ENCODE measurements at regions of chr4 and their contacts with region 1.

Region 1: DNA sequence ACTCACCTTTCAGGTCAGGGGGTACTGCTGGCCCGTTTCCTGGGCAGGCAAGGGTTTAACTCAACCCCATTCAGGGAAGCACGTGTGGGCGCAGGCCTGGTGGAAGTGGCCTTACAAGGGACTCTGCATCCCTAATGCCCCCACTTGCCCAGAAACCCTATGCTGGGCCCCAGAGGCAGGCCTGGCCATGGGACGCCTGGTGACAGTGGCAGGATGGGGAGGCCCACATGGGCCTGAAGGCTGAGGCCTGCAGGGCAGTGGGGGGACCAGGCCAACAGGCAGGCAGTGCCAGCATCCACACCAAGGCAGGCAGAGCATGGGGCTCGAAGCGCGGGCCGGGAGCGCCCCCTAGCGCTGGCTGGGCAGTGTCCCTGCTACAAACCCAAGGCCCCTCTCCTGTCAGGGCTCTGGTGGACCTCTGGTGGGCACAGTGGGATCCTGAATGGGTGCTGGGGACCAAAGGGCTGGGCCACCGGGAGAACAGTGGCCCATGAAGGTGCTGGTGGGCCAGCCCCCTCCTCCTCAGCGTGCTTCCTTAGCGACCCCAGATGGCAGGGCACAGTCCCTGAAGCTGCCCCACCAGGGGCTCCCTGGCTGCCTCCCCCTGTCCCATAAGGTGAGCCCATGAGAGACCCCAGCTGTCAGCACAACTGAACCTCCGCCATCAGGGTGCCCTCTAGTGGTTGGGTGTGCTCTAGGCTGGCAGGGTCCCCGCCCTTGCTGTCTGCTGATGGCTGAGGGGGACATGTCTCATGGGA is 16.8 kb downstream of the FGFR3 start:
- DNase-seq: peak; percentile 76 to 98
- H3K4me3 ChIP-seq: no peak overlapping the region
- H3K27ac ChIP-seq: no peak overlapping the region
- H3K4me1 ChIP-seq: no peaks in the 10 kb centered on the region; a peak in 1 of 7 replicates
- H3K27me3 ChIP-seq: no peaks in the 10 kb centered on the region
- CTCF ChIP-seq: peak in 2 of 3 experiments; percentile 95 to 98; a peak in 3 of 4 replicates
- EP300 ChIP-seq: no peak
- POLR2A ChIP-seq: peak in 1 of 2 experiments; percentile 36; a peak in 1 of 3 replicates
- RAD21 ChIP-seq: peak; percentile 95 to 98

Region 2: GRCh38 chr4:1726146-1726934 is 83.6 kb before region 1 on chr4:
- CTCF ChIA-PET with region 1: interaction called, 15 read pairs
- POLR2A ChIA-PET with region 1: interaction called, 4 read pairs
- DNase-seq: peak; percentile 79 to 99
- H3K4me3 ChIP-seq: no peak overlapping the region
- H3K27ac ChIP-seq: no peak overlapping the region
- H3K4me1 ChIP-seq: peaks cover 0 to 12% (median 5%) of the 10 kb centered on the region in 4 experiments; a peak in 6 of 7 replicates
- H3K27me3 ChIP-seq: no peaks in the 10 kb centered on the region
- CTCF ChIP-seq: peak in 2 of 3 experiments; percentile 82 to 98; a peak in 3 of 4 replicates
- EP300 ChIP-seq: no peak
- POLR2A ChIP-seq: no peak
- RAD21 ChIP-seq: peak; percentile 56 to 65

Region 3: DNA sequence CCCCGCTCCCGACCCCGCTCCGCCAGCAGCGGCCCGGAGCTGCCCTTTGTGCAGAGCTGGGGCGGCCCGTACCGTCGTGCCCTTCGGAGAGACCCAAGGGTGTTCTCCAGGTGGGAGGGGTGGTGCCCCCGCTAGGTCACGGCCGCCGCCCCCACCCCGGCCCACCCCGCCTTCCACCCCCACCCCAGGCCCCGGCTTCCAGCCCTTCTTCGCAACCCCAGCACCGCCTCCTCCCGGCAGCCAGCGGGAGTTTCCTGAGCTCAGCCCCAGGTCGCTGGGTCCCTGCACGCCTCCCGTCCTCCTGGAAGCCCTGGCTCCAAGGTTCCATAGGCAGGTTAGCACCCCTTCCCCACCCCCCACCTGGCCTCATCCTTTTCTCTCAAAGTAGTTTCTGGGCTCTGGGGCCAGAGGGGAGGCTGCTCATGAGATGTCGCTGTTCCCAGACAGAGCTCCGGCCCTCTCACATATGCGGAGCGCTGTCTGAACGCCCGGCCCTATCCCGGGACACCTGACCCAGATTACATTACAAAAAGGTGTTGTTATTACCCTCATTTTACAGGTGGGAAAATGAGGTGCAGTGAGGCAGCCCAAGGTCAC is 42.1 kb before region 1 on chr4:
- CTCF ChIA-PET with region 1: interaction called, 2,507 read pairs
- POLR2A ChIA-PET with region 1: interaction called, 20 read pairs
- DNase-seq: peak; percentile 43 to 84
- H3K4me3 ChIP-seq: peak overlapping the region; percentile 10 to 49 (median 26); a peak in 7 of 8 replicates
- H3K27ac ChIP-seq: no peak overlapping the region
- H3K4me1 ChIP-seq: peaks cover 5 to 44% (median 31%) of the 10 kb centered on the region in 4 experiments
- H3K27me3 ChIP-seq: peaks cover 0 to 5% (median 0%) of the 10 kb centered on the region in 4 experiments; a peak in 2 of 7 replicates
- CTCF ChIP-seq: peak in 2 of 3 experiments; percentile 45 to 51; a peak in 3 of 4 replicates
- EP300 ChIP-seq: no peak
- POLR2A ChIP-seq: no peak
- RAD21 ChIP-seq: peak; percentile 19 to 45; a peak in 3 of 4 replicates

Region 4: DNA sequence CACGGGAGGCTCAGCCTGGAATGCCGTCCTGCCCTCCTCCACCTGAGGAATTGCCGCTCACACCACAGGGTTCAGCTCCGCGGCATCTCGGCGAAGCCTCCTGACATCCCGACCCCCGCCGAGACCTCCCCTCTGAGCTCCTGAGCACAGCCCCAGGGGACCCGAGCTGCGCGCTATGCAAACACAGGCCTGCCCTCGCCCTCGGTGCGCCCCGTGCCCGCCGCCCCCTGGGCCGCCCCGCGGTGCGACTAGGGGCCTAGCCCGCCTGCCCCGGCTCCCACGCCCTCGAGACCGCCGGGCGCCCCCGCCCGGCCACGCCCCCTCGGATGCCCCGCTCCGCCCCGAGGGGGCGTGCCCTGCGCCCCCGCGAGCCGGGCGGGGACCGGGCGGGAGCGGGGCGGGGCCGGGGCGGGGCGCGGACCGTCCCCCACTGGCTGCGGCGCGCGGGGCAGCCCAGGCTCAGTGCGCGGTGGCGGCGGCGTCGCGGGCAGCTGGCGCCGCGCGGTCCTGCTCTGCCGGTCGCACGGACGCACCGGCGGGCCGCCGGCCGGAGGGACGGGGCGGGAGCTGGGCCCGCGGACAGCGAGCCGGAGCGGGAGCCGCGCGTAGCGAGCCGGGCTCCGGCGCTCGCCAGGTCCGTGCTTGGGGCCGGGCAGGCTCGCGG is 17.0 kb before region 1 on chr4 and contains the start of gene FGFR3:
- CTCF ChIA-PET with region 1: interaction called, 2,507 read pairs
- POLR2A ChIA-PET with region 1: interaction called, 5 read pairs
- DNase-seq: peak; percentile 47 to 83
- H3K4me3 ChIP-seq: peak within 1 kb of the TSS; percentile 55 to 71 (median 64)
- H3K27ac ChIP-seq: no peak within 1 kb of the TSS
- H3K4me1 ChIP-seq: peaks cover 0 to 19% (median 9%) of the 10 kb centered on the region in 4 experiments; a peak in 6 of 7 replicates
- H3K27me3 ChIP-seq: peaks cover 5 to 44% (median 36%) of the 10 kb centered on the region in 4 experiments
- CTCF ChIP-seq: no peak
- EP300 ChIP-seq: no peak
- POLR2A ChIP-seq: peak in 1 of 2 experiments; percentile 46; a peak in 2 of 3 replicates
- RAD21 ChIP-seq: no peak
- total RNA-seq, gene FGFR3: 19.5 TPM in 2 replicates

Region 5: DNA sequence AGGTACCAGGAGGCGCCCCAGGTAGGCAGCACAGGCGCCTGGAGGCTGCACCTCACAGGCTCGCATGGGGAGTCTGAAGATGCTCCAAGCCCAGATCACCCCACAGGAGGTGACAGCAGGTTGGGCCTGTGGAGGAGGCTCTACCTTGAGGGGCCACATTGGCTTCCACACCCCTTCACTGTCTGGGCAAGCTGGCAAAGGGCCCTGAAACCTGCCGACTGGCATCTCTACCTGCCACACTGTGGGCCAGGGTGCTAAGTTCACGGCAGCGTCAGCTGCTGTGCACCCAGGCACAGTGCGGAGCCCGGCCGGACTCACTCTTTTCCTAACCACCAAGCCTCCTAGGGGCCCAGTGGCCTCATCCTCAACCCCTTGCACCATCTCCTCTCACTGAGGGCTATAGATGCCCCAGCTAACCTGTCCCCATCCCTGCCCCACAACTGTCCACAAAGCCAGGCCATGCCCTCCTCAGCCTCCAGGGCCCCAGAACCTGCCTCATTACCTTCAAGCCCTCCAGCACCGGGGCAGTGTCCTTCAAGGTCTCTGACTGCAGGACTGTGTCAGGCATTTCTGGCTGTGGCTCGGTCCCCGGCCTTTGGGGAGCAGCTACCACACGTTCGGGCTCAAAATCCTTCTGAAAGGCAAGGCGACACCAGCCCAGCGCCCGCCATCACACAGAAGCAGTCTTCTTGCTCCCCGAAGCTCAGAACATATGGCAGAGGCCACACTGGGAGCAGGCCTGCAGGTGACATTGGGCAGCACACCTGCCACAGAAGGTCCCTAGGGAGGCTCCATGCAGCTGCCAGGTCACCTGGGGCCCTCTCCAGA is 12.0 kb after region 1 on chr4:
- CTCF ChIA-PET with region 1: interaction called, 22 read pairs
- POLR2A ChIA-PET with region 1: no interaction called
- DNase-seq: no peak
- H3K4me3 ChIP-seq: no peak overlapping the region
- H3K27ac ChIP-seq: no peak overlapping the region
- H3K4me1 ChIP-seq: no peaks in the 10 kb centered on the region
- H3K27me3 ChIP-seq: no peaks in the 10 kb centered on the region
- CTCF ChIP-seq: no peak
- EP300 ChIP-seq: no peak
- POLR2A ChIP-seq: no peak
- RAD21 ChIP-seq: no peak

Region 6: DNA sequence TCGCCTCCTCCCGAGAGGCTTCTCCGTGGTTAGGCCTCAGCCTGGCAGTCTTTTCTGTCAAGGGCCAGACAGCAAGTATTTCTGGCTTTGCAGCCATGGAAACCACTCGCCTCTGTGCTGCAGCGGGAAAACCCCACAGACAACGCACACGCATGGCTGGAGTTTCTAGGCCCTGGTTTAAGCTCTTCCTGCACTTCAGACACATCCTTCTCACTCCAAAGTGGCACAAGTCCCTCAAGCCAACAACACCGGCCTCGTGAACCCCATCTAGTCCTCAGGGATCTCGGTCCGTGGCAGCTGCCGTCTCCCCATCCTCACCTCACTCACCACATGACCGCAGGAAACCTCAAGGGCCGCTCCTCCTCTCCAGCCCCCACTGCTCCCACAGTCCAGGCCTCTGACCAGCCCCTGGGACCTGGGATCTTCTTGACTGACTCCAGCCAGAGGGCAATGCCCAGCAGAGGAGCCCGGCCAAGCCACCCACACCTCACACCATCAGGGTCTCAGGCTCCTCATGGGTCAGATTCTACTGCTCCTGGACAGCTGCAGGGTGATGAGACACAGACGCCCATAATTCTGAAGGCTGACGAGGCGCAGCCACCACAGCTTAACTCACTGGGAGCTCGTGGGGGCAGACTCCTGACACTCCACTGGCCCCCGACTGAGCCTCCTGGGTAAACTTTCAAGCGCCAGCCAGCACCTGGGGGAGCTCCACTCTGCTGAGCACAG is 24.3 kb after region 1 on chr4:
- CTCF ChIA-PET with region 1: interaction called, 16 read pairs
- POLR2A ChIA-PET with region 1: no interaction called
- DNase-seq: no peak
- H3K4me3 ChIP-seq: no peak overlapping the region
- H3K27ac ChIP-seq: no peak overlapping the region
- H3K4me1 ChIP-seq: peaks cover 0 to 4% (median 1%) of the 10 kb centered on the region in 4 experiments; a peak in 4 of 7 replicates
- H3K27me3 ChIP-seq: no peaks in the 10 kb centered on the region
- CTCF ChIP-seq: no peak
- EP300 ChIP-seq: no peak
- POLR2A ChIP-seq: no peak
- RAD21 ChIP-seq: no peak

Region 7: GRCh38 chr4:1981251-1982058 is 171.5 kb after region 1 on chr4:
- CTCF ChIA-PET with region 1: no interaction called
- POLR2A ChIA-PET with region 1: no interaction called
- DNase-seq: peak in 1 of 2 experiments; percentile 80
- H3K4me3 ChIP-seq: no peak overlapping the region
- H3K27ac ChIP-seq: 0 out of 2 replicates have a peak overlapping the region, but pooled peaks have one; percentile 29
- H3K4me1 ChIP-seq: no peaks in the 10 kb centered on the region; a peak in 1 of 7 replicates
- H3K27me3 ChIP-seq: no peaks in the 10 kb centered on the region
- CTCF ChIP-seq: no peak
- EP300 ChIP-seq: no peak
- POLR2A ChIP-seq: no peak; a peak in 1 of 3 replicates
- RAD21 ChIP-seq: no peak; a peak in 1 of 4 replicates